ENCODE measurements at regions of chr11 and their contacts with region 1.

Region 1: GRCh38 chr11:10208131-10208575 is 85.9 kb downstream of the SBF2 start:
- DNase-seq: no peak
- H3K4me3 Mint-ChIP-seq: no peak overlapping the region
- H3K27ac Mint-ChIP-seq: no peak overlapping the region
- H3K4me1 Mint-ChIP-seq: no peaks in the 10 kb centered on the region
- H3K27me3 Mint-ChIP-seq: peaks cover 11% of the 10 kb centered on the region

Region 2: DNA sequence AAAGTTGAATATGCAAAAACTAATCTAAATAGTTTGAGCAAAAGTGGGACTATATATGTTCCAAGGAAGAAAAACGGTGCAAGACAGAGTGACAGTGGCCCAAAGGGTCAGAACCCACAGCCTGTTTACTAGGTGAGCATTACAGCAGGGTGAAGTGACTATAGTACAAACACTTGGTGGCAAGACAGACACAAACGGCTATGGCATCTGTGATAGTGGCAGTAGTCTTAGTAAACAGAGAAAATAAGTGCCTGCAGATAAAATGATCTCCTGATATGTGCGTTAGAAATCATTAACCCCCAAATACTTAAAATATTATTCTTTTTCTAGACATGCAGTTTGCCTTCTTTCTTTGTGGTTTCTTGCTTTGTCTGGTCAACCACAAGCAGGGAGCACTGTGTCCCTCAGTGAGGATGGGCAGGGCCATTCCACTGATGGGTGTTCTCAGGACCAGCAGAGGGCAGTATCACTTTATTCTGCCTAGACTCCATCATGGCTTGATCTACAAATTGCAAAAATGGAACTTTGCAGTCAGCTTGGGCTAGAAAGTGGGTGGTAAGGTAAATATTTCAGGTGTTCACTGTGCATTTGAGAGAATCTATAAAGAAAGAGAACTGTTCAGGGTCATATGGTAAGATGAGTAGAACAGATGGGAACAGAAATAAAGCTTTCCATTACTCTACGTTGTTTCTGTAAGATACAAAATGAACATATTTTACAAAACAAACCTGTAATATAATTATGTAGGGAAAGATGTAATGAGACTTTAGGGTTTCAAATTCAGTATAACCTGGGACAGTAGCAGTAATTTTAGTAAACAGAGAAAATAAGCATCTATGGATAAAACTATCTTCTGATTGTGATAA is 346.1 kb before region 1 on chr11:
- intact Hi-C with region 1: loop called (anchors 2 kb)
- DNase-seq: peak; percentile 11
- H3K4me3 Mint-ChIP-seq: no peak overlapping the region
- H3K27ac Mint-ChIP-seq: peak overlapping the region; percentile 1
- H3K4me1 Mint-ChIP-seq: peaks cover 34% of the 10 kb centered on the region
- H3K27me3 Mint-ChIP-seq: peaks cover 4% of the 10 kb centered on the region

Region 3: DNA sequence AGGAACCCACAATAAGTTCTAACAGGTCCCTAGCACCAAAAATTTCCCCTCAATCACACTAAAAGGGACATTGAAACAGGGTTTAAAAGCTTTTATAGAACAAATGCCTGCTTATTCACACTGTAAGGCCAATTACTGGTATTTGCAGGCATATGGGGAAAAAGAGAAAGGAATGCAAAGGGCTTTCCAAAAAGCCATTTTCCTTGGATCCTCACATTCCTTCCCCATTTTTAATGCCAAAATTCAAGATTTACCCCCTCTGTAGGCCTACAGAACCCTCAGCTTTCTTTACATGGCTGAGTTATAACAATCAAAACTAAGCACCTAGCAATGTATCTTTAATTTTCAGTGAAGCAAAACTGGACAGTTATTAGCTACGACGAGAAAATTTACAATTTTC is 16.1 kb before region 1 on chr11:
- intact Hi-C with region 1: no loop called
- DNase-seq: no peak
- H3K4me3 Mint-ChIP-seq: no peak overlapping the region
- H3K27ac Mint-ChIP-seq: no peak overlapping the region
- H3K4me1 Mint-ChIP-seq: no peaks in the 10 kb centered on the region
- H3K27me3 Mint-ChIP-seq: peaks cover under 1% of the 10 kb centered on the region

Region 4: DNA sequence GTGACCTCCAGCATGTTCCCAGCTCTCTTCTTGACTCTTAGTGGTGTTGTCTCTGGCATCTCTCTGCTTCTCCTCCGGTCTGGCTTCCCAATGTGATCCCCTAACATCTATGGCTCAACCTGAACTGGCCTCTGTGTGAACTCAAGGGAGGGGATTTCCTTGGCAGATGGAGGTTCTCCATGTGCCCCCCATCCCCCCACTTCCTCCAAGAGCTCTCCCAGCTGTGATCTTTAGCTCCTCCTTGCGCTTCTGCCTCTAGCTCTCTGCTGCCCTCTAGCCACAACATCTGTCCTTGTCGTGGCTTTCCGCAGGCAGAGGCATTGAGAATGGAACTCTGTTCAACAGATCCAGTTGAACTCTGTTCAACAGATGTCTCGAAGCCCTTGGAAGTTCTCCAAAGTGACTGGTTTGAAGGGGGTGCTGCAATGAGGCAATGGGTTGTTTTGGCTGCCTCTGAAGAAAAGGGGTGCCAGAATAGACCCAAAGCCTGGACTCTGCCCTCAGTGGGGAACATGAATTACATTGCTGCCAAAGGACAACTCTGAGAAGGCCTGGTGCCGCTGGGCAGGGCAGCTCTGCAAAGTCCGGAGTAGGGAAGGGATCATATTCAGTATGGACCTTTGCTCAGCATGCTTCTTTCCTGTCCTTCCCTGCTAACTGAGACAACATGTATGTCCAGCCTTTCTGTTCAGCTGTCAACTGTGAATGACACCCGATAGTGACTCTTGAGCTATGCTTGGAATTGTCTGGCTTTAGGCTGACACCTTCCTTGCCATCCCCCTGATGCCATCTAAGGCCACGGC is 158.6 kb after region 1 on chr11:
- intact Hi-C with region 1: loop called (anchors 2 kb)
- DNase-seq: peak; percentile 51
- H3K4me3 Mint-ChIP-seq: no peak overlapping the region
- H3K27ac Mint-ChIP-seq: no peak overlapping the region
- H3K4me1 Mint-ChIP-seq: peaks cover 5% of the 10 kb centered on the region
- H3K27me3 Mint-ChIP-seq: peaks cover 5% of the 10 kb centered on the region

Region 5: GRCh38 chr11:11000579-11001283 is 792.6 kb after region 1 on chr11:
- intact Hi-C with region 1: no loop called
- DNase-seq: no peak
- H3K4me3 Mint-ChIP-seq: no peak overlapping the region
- H3K27ac Mint-ChIP-seq: no peak overlapping the region
- H3K4me1 Mint-ChIP-seq: no peaks in the 10 kb centered on the region
- H3K27me3 Mint-ChIP-seq: peaks cover 21% of the 10 kb centered on the region

Measured in activated T-helper 1 cell treated with anti-CD3 and anti-CD28 coated beads, Interleukin-12 subunit alpha, Interleukin-12 subunit beta, Interleukin-2, Interleukin-4 antibody, amounts not matched to agents 30 ng/mL and 10 ng/mL and 1 ng/mL, durations not matched to agents 14 hours and 24 hours and 36 hours (primary cell).